CD4-positive, alpha-beta memory T cell (primary cell): ENCODE measurements at regions of chr7 and their contacts with region 1.

Region 1: DNA sequence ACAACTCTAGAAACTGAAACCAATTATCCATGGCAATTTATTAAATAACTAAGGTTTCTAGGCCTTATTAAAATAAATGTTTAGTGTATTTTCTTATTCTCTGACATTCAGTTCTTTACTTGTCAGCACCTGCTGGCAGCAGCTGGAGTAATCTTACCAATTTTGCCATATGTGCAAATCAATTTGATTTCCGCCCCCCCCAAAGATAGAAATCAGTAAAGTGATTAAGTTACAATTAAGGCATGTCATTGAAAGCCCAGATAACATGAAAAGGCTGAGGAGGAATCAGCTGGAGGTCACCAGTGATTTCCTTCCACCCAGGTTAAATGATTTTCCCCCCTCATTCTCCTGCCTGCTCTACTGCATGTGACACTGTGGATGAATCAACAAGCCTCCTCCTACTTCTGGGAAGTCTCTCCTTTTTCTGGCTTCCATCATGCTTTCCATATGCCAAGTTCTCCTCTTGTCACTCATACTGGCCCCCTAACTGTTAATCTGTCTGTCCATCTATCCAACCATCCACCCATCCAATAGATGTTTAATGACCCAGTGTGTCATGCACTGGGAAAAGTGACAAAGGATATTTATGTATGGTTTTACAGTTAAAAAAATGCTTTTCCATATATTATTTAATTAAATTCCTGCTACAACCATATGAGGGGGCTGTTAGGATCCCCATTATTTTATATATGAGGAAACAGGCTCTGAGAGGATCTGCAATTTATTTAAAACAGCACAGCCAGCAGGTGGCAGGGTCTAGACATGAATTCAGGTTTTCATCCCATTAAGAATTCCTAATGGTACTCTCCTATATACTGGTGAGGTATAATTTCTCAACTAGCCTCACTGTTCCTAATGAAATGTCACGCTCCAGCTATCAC is 116.5 kb downstream of the ATXN7L1 start:
- DNase-seq: peak in 2 of 5 donors; percentile 23 to 34
- H3K4me3 ChIP-seq: no peak overlapping the region
- H3K4me3 Mint-ChIP-seq: peak overlapping the region in 4 of 8 donors; percentile 8 to 67 (median 23)
- H3K27ac ChIP-seq: no peak overlapping the region
- H3K27ac Mint-ChIP-seq: peak overlapping the region in 6 of 7 donors; percentile 38 to 94 (median 78)
- H3K4me1 ChIP-seq: peaks cover 39% of the 10 kb centered on the region
- H3K4me1 Mint-ChIP-seq: peaks cover 33 to 49% (median 39%) of the 10 kb centered on the region in 4 donors
- H3K27me3 ChIP-seq: no peaks in the 10 kb centered on the region
- H3K27me3 Mint-ChIP-seq: no peaks in the 10 kb centered on the region

Region 2: GRCh38 chr7:105691733-105692564 is 68.0 kb before region 1 on chr7:
- CTCF ChIA-PET with region 1: interaction called, 13 read pairs
- POLR2A ChIA-PET with region 1: interaction called, 3 read pairs
- intact Hi-C with region 1: loop called (anchors 5 kb)
- DNase-seq: peak; percentile 84 to 95 (median 91)
- H3K4me3 ChIP-seq: peak overlapping the region; percentile 71 to 75
- H3K4me3 Mint-ChIP-seq: peak overlapping the region; percentile 91 to 98 (median 94)
- H3K27ac ChIP-seq: peak overlapping the region; percentile 89
- H3K27ac Mint-ChIP-seq: peak overlapping the region; percentile 96 to 100 (median 98)
- H3K4me1 ChIP-seq: peaks cover 44% of the 10 kb centered on the region
- H3K4me1 Mint-ChIP-seq: peaks cover 29 to 78% (median 57%) of the 10 kb centered on the region in 4 donors
- H3K27me3 ChIP-seq: no peaks in the 10 kb centered on the region
- H3K27me3 Mint-ChIP-seq: no peaks in the 10 kb centered on the region

Region 3: GRCh38 chr7:105786520-105787468 is 26.9 kb after region 1 on chr7:
- CTCF ChIA-PET with region 1: interaction called, 13 read pairs
- POLR2A ChIA-PET with region 1: no interaction called
- intact Hi-C with region 1: no loop called
- DNase-seq: no peak
- H3K4me3 ChIP-seq: no peak overlapping the region
- H3K4me3 Mint-ChIP-seq: no peak overlapping the region
- H3K27ac ChIP-seq: no peak overlapping the region
- H3K27ac Mint-ChIP-seq: peak overlapping the region in 1 of 7 donors; percentile 43
- H3K4me1 ChIP-seq: peaks cover under 1% of the 10 kb centered on the region
- H3K4me1 Mint-ChIP-seq: peaks cover 0 to 6% (median 3%) of the 10 kb centered on the region in 4 donors
- H3K27me3 ChIP-seq: no peaks in the 10 kb centered on the region
- H3K27me3 Mint-ChIP-seq: no peaks in the 10 kb centered on the region

Region 4: DNA sequence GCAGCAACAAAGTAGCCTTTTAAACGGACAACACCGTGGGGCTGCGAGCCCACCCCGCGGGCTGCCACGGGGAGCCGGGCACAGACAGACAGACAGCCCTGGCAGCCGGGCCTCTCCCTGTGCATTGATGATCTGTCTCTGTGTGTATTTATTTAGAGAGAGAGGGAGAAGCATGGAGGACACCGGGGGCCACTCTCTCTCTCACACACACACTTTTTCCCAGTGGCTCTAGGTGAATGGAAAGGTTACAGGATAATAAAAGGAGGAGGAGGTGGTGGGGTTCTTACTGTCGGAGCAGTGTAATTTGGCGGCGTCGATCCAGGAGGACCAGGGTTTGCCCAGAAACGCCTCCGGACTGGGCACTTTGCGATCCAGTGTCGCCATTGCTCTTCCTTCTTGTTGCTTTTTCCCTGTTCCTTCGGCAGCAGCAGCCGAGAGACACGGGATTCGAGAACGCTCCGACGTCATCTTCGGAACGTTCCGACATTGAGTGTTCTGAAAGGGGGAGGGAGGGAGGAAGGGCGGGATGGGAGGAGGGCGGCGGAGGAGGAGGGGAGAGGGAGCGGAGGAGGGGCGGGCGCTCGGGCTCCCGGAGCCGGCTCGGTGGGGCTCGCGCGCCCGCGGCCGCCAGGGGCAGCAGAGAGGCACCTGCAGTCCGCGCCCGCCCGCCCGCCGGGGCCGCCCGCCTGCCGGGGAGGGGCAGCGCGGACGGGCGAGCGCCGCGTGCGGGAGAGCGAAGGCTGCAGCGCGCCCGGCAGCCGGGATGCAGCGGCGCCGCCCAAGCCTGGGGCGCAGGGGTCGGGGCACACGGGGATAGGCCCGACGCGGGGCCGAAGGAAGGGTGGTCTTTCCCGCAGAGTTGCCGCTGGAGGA is 116.4 kb after region 1 on chr7 and contains the start of gene ATXN7L1:
- CTCF ChIA-PET with region 1: interaction called, 58 read pairs
- POLR2A ChIA-PET with region 1: interaction called, 25 read pairs
- intact Hi-C with region 1: loop called (anchors 1 kb)
- DNase-seq: peak; percentile 85 to 90 (median 86)
- H3K4me3 ChIP-seq: peak within 1 kb of the TSS; percentile 78 to 92
- H3K4me3 Mint-ChIP-seq: peak within 1 kb of the TSS; percentile 95 to 100 (median 98)
- H3K27ac ChIP-seq: peak within 1 kb of the TSS; percentile 82
- H3K27ac Mint-ChIP-seq: peak within 1 kb of the TSS; percentile 83 to 99 (median 96)
- H3K4me1 ChIP-seq: peaks cover 52% of the 10 kb centered on the region
- H3K4me1 Mint-ChIP-seq: peaks cover 43 to 63% (median 51%) of the 10 kb centered on the region in 4 donors
- H3K27me3 ChIP-seq: no peaks in the 10 kb centered on the region
- H3K27me3 Mint-ChIP-seq: no peaks in the 10 kb centered on the region
- total RNA-seq, gene ATXN7L1: 60.4 to 62.2 TPM

Region 5: DNA sequence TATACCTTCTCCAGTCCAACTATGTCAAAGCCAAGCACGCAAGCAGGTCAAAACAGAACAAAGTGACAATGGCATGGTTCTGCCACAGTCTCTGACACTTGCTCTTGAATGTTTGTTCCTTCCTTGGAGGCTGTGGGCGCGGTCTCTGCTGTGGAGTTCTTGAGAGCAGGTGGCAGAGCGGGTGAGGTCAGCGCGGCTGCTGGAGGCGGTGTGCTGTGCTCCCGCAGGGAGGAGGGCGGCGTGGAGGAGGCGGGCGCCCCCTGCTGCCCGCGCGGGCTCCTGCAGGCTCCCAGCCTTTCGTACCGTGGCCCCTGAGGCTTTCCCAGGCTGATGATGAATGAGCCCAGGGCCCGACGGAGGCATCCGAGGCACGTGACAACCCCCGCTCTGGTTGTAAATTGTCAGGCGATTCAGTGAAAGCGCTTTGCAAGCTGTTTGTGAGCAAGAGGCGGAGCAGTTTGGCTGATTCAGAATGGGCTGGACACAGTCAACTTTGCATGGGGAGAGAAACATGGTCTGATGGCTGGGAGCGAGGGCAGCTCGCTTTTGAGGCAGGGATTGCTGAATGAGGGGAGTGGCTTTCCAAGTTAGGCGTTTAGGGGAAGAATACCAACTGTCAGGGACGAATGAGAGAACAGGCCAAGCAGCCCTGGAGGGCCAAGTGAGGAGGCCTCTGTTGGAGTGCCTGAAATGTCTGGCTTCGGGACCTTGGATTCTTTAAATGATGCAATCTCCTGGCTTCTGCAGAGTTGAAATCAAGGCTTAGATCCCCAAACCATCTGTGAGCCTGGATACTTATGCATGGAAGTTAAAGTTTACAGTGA is 249.7 kb after region 1 on chr7:
- CTCF ChIA-PET with region 1: interaction called, 99 read pairs
- POLR2A ChIA-PET with region 1: interaction called, 4 read pairs
- intact Hi-C with region 1: loop called (anchors 1 kb)
- DNase-seq: peak; percentile 77 to 83 (median 78)
- H3K4me3 ChIP-seq: no peak overlapping the region
- H3K4me3 Mint-ChIP-seq: peak overlapping the region in 4 of 8 donors; percentile 34 to 64 (median 48)
- H3K27ac ChIP-seq: no peak overlapping the region
- H3K27ac Mint-ChIP-seq: peak overlapping the region in 6 of 7 donors; percentile 64 to 85 (median 74)
- H3K4me1 ChIP-seq: peaks cover 23% of the 10 kb centered on the region
- H3K4me1 Mint-ChIP-seq: peaks cover 18 to 28% (median 24%) of the 10 kb centered on the region in 4 donors
- H3K27me3 ChIP-seq: no peaks in the 10 kb centered on the region
- H3K27me3 Mint-ChIP-seq: no peaks in the 10 kb centered on the region

Region 6: DNA sequence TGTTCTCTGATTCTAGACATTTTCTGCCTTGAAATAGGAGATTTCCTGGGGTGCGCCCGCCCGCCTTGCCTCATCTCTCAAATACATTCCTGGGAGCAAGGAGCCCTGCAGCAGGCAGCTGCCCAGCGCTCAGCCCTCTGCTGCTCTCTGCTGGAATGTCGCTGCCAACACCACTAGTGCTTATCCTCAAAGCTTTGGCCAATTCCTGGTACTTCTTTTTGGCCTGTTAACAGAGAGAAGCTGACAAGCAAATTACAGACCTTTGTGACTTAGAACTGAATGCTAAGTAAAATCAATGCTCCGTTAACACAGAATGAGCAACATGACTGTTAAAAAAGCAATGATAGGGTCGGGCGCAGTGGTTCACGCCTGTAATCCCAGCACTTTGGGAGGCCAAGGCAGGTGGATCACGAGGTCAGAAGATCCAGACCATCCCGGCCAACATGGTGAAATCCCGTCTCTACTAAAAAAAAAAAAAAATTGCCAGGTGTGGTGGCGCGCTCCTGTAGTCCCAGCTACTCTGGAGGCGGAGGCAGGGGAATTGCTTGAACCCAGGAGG is 394.1 kb after region 1 on chr7:
- CTCF ChIA-PET with region 1: interaction called, 5 read pairs
- POLR2A ChIA-PET with region 1: no interaction called
- intact Hi-C with region 1: loop called (anchors 5 kb)
- DNase-seq: peak; percentile 59 to 74 (median 65)
- H3K4me3 ChIP-seq: no peak overlapping the region
- H3K4me3 Mint-ChIP-seq: no peak overlapping the region
- H3K27ac ChIP-seq: no peak overlapping the region
- H3K27ac Mint-ChIP-seq: peak overlapping the region in 1 of 7 donors; percentile 80
- H3K4me1 ChIP-seq: no peaks in the 10 kb centered on the region
- H3K4me1 Mint-ChIP-seq: peaks cover 0 to 9% (median 3%) of the 10 kb centered on the region in 4 donors
- H3K27me3 ChIP-seq: peaks cover 3% of the 10 kb centered on the region
- H3K27me3 Mint-ChIP-seq: peaks cover 11 to 19% of the 10 kb centered on the region in 2 donors